ENCODE measurements at regions of chr22 and their contacts with region 1.

Region 1: DNA sequence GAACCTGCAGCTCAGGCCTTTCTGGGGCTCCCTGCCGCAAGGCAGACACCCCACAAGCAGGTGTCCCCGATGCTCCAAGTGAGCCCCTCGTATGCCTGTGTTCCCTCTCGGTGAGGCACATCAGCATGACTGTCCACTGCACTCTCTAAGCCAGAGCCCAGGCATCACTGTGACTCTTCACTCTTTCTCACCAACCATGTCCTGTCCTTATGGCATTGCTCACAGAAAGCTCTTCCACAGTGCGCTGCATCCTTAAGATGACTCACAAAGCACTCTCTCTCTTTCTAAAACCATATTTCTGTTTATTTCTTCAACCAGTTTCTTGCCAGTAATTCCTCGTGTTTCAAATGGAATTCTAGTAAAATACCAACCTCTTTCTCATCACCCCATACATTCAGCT is 18.1 kb downstream of the GAB4 start:
- DNase-seq: no peak
- H3K4me3 ChIP-seq: no peak overlapping the region
- H3K27ac ChIP-seq: no peak overlapping the region
- H3K4me1 ChIP-seq: no peaks in the 10 kb centered on the region
- H3K27me3 ChIP-seq: peaks cover 27% of the 10 kb centered on the region
- CTCF ChIP-seq: no peak

Region 2: GRCh38 chr22:16970446-16970845 is 19.5 kb before region 1 on chr22:
- CTCF ChIA-PET with region 1: no interaction called
- POLR2A ChIA-PET with region 1: no interaction called
- intact Hi-C with region 1: loop called (anchors 2 kb)
- DNase-seq: no peak
- H3K4me3 ChIP-seq: no peak overlapping the region
- H3K27ac ChIP-seq: no peak overlapping the region
- H3K4me1 ChIP-seq: no peaks in the 10 kb centered on the region
- H3K27me3 ChIP-seq: peaks cover 5% of the 10 kb centered on the region
- CTCF ChIP-seq: no peak

Region 3: GRCh38 chr22:17830043-17830961 is 840.4 kb after region 1 on chr22:
- CTCF ChIA-PET with region 1: no interaction called
- POLR2A ChIA-PET with region 1: no interaction called
- intact Hi-C with region 1: no loop called
- DNase-seq: peak; percentile 86
- H3K4me3 ChIP-seq: no peak overlapping the region
- H3K27ac ChIP-seq: no peak overlapping the region
- H3K4me1 ChIP-seq: no peaks in the 10 kb centered on the region
- H3K27me3 ChIP-seq: no peaks in the 10 kb centered on the region
- CTCF ChIP-seq: peak; percentile 97

Measured in A673 (cell line).